ENCODE measurements at regions of chr10 and their contacts with region 1.

Region 1: DNA sequence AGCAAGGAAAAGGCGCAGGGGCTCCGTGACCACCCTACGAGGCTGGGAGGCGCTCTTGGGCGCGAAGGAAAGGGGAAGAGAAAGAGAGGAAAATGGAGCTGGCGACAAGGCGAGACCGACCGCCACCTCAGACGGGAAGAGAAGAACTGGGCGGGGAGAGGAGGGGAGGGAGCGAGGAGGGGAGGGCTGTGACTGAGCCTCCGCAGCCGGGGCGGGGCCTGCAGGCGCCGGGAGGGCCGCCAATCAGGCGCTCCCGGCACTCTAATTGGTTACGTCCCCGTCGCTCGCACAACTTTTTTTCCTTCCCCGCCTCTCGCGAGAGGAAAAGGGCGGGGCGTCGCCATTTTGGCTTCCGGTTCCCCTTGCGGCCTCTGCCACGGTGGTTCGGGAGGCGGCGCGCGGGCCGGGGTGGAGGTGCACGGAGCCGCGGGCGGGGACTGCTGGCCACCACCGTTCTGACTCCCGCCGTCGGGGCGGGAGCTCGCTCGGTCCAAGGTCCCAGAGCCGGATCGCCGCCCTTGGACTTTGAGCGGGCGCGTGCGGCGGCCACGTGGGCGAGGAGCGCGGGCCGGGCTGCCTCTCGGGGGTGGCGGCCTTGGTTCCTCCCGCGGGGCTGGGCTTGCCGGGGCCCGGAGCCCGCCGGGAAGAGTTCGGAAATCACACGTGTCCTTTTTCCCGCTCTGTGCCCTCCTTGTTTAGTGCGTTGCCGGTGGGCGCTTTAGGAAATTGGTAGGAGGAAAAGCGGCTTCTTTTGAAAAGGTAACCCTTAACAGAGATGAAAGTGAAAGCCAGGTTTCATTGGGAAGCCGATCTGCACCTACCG is at the start of gene GDI2:
- DNase-seq: peak; percentile 94 to 96
- ATAC-seq: peak; percentile 92 to 96
- H3K4me3 ChIP-seq: peak within 1 kb of the TSS; percentile 85 to 97 (median 90)
- H3K27ac ChIP-seq: peak within 1 kb of the TSS; percentile 91 to 98 (median 98)
- H3K4me1 ChIP-seq: peaks cover 43 to 47% of the 10 kb centered on the region in 2 donors
- H3K27me3 ChIP-seq: no peaks in the 10 kb centered on the region
- CTCF ChIP-seq: peak in 2 of 5 experiments; percentile 15 to 21
- POLR2A ChIP-seq: peak; percentile 89 to 91
- total RNA-seq, gene GDI2: 143 to 197 (median 171) TPM

Region 2: DNA sequence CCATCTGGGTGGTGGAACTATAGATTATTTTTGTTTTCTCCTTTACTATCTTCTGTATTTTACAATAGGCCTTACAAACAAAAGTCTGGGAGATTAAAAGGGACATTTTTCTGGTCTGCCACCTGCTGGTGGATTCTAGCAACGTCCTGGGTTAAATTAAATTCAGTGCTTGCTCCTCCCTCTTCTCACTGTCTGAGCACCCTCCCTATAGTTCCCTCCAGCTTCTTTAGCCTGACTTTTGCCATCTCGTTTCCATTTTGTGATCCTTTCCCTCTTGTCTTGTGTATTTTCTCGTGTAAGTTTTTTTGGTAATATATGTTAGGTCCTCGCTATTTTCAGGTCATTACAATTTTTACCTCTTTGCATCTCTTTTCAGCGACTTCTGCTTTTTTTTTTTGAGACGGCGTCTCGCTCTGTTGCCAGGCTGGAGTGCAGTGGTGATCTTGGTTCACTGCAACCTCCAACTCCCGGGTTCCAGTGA is 60.1 kb after region 1 on chr10:
- in situ Hi-C with region 1: no loop called
- intact Hi-C with region 1: loop called (anchors 1 kb)
- DNase-seq: peak in 1 of 2 donors; percentile 52
- ATAC-seq: peak; percentile 74 to 84
- H3K4me3 ChIP-seq: no peak overlapping the region
- H3K27ac ChIP-seq: no peak overlapping the region
- H3K4me1 ChIP-seq: peaks cover 0 to 4% of the 10 kb centered on the region in 2 donors
- H3K27me3 ChIP-seq: no peaks in the 10 kb centered on the region
- CTCF ChIP-seq: peak; percentile 49 to 71 (median 69)
- POLR2A ChIP-seq: no peak

Region 3: GRCh38 chr10:5977471-5978229 is 164.2 kb after region 1 on chr10 and contains the start of gene IL15RA:
- in situ Hi-C with region 1: no loop called
- intact Hi-C with region 1: loop called (anchors 5 kb)
- DNase-seq: peak; percentile 48 to 76
- ATAC-seq: peak; percentile 75 to 77
- H3K4me3 ChIP-seq: peak within 1 kb of the TSS; percentile 84 to 96 (median 87)
- H3K27ac ChIP-seq: peak within 1 kb of the TSS; percentile 91 to 97 (median 93)
- H3K4me1 ChIP-seq: peaks cover 7 to 19% of the 10 kb centered on the region in 2 donors
- H3K27me3 ChIP-seq: no peaks in the 10 kb centered on the region
- CTCF ChIP-seq: peak in 4 of 5 experiments; percentile 12 to 54 (median 31)
- POLR2A ChIP-seq: peak; percentile 57 to 58
- total RNA-seq, gene IL15RA: 13.1 to 17.6 (median 15.6) TPM